ENCODE measurements at regions of chr4 and their contacts with region 1.

Region 1: DNA sequence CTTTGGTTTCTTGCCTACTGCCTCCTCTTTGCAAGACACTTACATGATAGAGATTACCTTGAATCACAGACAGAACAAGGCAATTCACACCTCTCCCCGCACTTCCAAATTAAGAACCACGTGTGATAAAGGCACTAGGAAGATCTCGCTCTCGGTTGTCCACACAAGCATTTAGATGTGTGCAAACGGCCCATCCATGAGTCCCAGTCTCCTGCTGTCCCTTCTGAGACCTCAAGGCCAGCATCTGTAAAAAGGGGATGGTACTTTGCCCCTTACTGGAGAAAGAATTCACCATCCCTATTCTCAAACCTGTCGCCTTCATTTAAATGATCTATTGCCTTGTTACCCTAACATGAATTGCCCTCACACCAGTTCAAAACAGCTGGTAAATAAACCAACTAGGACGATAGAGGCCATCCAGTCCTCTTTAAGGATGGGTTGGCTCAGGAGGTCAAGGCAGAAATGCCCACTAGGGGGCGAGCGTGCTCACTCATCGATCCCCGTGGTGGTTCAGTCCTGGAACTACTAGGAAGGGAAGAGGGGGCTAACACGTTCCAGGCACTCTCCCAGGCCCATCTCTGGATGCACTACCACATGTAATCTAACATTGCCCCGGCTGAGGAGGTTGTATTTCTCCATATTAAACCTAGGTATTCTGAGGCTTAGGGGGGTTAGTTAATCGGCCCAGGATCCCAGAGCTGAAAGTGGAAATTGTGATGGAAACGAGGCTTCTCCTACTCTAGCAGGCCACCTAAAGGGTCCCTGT is 95.8 kb downstream of the DHX15 start:
- DNase-seq: peak; percentile 42 to 85 (median 80)
- H3K4me3 ChIP-seq: no peak overlapping the region
- H3K27ac ChIP-seq: peak overlapping the region in 1 of 59 donors; percentile 24
- H3K27me3 ChIP-seq: no peaks in the 10 kb centered on the region
- CTCF ChIP-seq: peak; percentile 63 to 95 (median 83)

Region 2: GRCh38 chr4:24690436-24690835 is 201.9 kb after region 1 on chr4:
- intact Hi-C with region 1: loop called in 1 of 2 experiments (anchors 10 kb)
- DNase-seq: no peak
- H3K4me3 ChIP-seq: no peak overlapping the region
- H3K27ac ChIP-seq: no peak overlapping the region
- H3K27me3 ChIP-seq: no peaks in the 10 kb centered on the region
- CTCF ChIP-seq: no peak

Region 3: DNA sequence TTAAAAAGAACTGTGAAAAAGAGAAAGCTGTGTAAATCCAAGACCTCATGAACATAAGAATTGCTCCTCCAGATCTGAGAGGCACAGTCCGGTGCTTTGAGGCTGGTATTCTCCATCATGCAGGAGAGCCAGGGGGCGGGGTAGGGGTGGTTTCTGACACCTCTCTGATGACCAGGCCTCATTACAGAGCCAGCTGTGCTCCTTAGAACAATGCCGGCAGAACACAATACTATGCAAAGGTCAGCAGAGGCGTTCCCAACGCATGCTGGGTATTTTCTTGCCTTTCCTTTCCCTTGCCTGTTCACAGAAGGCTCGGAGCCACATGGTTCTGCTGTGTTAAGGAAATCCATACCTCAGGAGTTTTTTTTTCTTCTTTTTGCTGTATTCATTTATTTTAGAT is 215.6 kb after region 1 on chr4:
- intact Hi-C with region 1: loop called (anchors 5 to 10 kb)
- DNase-seq: no peak
- H3K4me3 ChIP-seq: no peak overlapping the region
- H3K27ac ChIP-seq: peak overlapping the region in 1 of 59 donors; percentile 9
- H3K27me3 ChIP-seq: no peaks in the 10 kb centered on the region
- CTCF ChIP-seq: no peak

Region 4: DNA sequence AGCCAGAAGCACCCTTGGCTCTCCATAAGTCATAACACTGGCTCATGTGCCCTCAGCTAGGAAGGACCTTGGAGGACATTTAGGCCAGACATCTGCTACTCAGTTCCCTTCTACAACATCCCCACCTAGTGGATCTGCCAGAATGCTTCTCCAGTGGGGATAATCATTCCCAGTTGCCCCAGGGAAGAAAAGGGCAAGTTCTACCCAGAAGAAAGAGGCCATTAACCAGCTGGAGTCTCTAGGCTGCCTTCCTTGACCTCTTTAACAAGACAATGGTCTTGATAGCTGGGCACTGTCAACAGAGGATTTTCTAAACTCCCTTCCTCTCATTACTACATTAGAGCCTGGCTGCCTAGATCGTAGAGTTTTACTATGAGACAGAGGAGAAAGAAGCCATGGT is 500.2 kb after region 1 on chr4:
- intact Hi-C with region 1: loop called in 1 of 2 experiments (anchors 5 kb)
- DNase-seq: no peak
- H3K4me3 ChIP-seq: no peak overlapping the region
- H3K27ac ChIP-seq: no peak overlapping the region
- H3K27me3 ChIP-seq: no peaks in the 10 kb centered on the region
- CTCF ChIP-seq: peak in 45 of 56 donors; percentile 11 to 59 (median 40)

Measured in dorsolateral prefrontal cortex (tissue), 120 donors.